ENCODE measurements at regions of chr2 and their contacts with region 1.

Region 1: GRCh38 chr2:39913648-39914461 is 134.8 kb upstream of the THUMPD2 start:
- DNase-seq: peak; percentile 32
- ATAC-seq: no peak
- H3K4me3 Mint-ChIP-seq: no peak overlapping the region
- H3K27ac Mint-ChIP-seq: no peak overlapping the region
- H3K4me1 Mint-ChIP-seq: peaks cover 21% of the 10 kb centered on the region
- H3K27me3 Mint-ChIP-seq: peaks cover 9% of the 10 kb centered on the region

Region 2: DNA sequence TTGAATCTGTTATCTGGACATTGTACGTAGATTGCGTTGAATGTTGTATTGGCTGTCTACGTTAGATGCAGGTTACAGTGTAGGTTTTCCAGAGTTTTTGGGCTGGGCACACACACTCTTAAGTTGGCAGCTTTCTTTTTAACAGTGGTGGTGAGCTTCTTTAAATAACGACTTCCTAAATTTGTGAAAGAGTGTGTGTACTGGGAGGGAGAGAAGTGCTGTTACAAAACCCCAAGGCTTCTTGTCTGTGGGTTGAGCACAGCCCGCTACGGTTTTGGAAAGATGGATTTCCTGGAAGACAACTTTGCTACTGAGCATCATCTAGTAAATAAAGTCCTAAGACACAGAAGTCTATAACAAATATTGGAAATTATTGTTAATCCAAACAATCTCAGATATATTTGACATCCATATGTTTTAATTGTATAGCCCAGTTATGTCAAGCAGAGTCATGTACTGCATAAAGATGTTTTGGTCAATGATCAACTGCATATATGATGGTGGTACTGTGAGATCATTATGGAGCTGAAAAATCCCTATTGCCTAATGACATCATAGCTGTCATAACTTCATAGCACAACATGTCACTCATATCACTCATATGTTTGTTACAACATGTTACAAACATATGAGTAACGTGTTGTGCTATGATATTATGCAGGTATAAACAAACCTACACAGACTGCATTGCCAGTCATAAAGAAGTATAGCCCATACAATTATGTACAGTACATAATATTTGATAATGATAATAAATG is 126.9 kb before region 1 on chr2:
- CTCF ChIA-PET with region 1: no interaction called
- POLR2A ChIA-PET with region 1: no interaction called
- DNase-seq: no peak
- ATAC-seq: no peak
- H3K4me3 Mint-ChIP-seq: no peak overlapping the region
- H3K27ac Mint-ChIP-seq: no peak overlapping the region
- H3K4me1 Mint-ChIP-seq: peaks cover 2% of the 10 kb centered on the region
- H3K27me3 Mint-ChIP-seq: no peaks in the 10 kb centered on the region

Region 3: DNA sequence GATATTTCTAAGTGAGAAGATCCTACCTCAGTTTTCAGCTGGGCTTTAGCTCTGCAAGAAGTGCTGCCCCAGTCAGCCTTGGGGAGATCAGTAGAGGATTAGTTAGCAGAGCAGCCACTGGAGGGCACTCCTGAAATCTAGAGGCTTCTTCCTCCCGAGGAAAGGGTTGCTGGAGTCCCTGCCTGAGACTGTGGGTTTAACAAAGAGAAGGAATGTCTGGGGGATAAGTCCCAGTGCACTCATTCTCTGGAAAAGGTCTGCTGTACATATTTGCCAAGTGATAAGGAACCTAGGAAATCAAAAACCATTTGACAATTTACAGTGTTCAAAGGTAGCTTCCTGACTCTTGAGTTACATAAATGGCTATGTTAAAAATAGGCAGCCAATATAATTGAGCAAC is 330.8 kb after region 1 on chr2:
- CTCF ChIA-PET with region 1: interaction called, 10 read pairs
- POLR2A ChIA-PET with region 1: no interaction called
- DNase-seq: peak; percentile 21
- ATAC-seq: no peak
- H3K4me3 Mint-ChIP-seq: no peak overlapping the region
- H3K27ac Mint-ChIP-seq: no peak overlapping the region
- H3K4me1 Mint-ChIP-seq: no peaks in the 10 kb centered on the region
- H3K27me3 Mint-ChIP-seq: no peaks in the 10 kb centered on the region

Region 4: DNA sequence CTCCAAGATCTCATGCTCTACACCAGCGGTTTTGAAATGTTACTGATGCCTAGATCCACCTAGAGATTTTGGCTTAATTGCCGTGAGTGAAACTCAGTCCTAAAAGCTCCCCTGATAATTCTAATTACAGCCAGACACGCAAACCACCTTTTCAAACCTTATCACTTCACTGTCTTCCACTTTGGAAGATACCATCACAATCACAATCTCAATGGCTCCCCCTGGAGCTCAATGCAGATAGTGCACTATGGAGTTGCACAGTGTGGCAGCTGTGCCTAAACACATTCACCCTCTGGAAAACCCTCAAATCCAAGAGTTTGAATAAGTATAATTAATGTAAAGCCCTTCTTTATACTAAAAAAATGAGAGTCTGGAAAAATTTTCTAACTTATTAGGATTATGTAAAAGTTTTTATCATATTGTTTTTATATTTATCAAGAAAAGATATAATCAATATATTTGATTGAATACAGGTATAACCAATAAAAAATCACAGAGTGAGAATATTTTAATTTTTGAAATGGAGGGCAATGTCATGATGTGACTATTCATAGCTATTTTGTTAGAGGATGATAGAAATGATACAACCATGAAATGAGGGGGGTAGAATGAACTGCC is 640.9 kb after region 1 on chr2:
- CTCF ChIA-PET with region 1: interaction called, 56 read pairs
- POLR2A ChIA-PET with region 1: no interaction called
- DNase-seq: peak; percentile 63
- ATAC-seq: peak; percentile 68
- H3K4me3 Mint-ChIP-seq: no peak overlapping the region
- H3K27ac Mint-ChIP-seq: no peak overlapping the region
- H3K4me1 Mint-ChIP-seq: no peaks in the 10 kb centered on the region
- H3K27me3 Mint-ChIP-seq: peaks cover 4% of the 10 kb centered on the region

Measured in activated CD8-positive, alpha-beta T cell treated with anti-CD3 and anti-CD28 coated beads, Interleukin-2, amount 10 ng/mL, durations not matched to agents 7 days and 5 days (primary cell).